ENCODE measurements at regions of chr3 and their contacts with region 1.

Region 1: DNA sequence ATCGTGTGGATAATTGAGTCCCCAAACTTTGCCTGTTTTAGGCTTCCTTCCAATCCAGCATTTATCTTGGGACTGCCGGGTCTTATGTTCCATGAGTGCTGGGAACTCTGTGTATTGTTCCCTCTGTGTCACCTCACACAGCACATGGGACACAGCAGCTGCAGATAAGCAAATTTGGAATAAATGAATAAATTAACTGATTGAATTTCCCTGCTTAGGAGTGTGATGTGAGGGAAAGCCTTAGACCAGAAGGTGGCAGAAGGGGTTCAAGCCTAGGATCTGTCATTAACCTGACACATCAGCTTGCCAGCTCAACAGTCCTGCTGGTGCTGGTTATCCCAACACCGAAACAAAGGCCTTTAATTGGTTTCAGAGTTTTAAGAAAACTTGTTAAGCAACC is 114.3 kb downstream of the OXSM start:
- DNase-seq: no peak
- ATAC-seq: peak; percentile 72

Region 2: GRCh38 chr3:26118165-26118564 is 214.0 kb after region 1 on chr3:
- intact Hi-C with region 1: loop called (anchors 5 kb)
- DNase-seq: no peak
- ATAC-seq: peak; percentile 59

Region 3: DNA sequence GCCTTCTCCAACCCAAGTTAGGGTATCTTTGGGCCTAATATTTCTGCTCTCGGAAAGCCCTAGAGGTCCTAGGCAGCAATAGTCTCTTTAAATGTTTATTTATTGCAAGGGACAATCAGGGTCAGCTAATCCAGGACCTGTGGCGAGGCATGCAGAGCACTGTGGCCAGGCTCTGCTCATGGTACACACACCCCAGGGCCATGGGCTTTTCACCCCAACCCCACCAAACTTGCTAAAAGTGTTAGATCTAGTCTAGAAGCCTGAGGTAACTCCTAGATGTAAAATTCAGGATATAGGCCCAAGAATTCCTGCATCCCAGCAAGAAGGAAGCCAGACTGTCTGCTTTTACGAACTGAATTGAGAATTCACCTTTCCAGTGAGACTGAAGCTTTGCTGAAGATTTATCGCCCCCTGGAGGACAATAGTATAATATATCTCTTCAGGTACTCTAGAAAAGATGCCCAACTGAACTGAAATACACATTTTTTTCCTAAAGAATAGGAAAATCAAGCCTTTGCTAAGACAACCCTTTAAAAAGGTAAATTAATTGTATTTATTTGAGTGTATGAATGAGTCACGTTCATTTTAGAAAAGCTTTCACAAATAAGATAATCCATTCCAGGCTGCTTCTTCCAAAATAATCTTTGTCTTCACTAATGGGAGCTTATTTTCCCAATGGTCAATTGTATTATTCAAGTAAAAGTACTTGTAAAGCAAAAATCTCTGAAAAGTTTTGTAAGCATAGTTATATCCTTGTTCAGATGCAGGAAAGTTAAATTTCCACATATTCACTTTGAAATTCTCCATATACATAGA is 808.2 kb after region 1 on chr3:
- intact Hi-C with region 1: loop called (anchors 5 kb)
- DNase-seq: no peak
- ATAC-seq: peak; percentile 70

Measured in Right ventricle myocardium superior (tissue), 1 donor.